ENCODE measurements at regions of chr21 and their contacts with region 1.

Region 1: DNA sequence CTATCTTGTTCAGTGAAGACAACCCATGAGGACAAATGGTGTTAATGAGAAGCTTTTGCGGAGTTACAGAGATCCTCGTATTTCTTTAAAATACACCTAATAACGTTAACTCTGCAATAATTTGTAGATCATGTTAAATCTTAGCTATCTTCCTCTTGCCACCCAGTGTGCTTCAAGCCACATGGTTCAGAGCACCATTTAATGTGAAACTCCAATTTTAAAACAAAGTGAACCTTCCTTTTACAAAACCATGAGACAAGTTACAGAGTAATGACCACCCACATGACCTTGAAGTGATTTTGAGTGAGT is 1.7 kb upstream of the KCNE2 start:
- DNase-seq: no peak
- H3K4me3 Mint-ChIP-seq: peak overlapping the region; percentile 25
- H3K27ac Mint-ChIP-seq: no peak overlapping the region
- H3K4me1 Mint-ChIP-seq: peaks cover 6% of the 10 kb centered on the region
- H3K27me3 Mint-ChIP-seq: peaks cover 37% of the 10 kb centered on the region
- CTCF ChIP-seq: no peak

Region 2: DNA sequence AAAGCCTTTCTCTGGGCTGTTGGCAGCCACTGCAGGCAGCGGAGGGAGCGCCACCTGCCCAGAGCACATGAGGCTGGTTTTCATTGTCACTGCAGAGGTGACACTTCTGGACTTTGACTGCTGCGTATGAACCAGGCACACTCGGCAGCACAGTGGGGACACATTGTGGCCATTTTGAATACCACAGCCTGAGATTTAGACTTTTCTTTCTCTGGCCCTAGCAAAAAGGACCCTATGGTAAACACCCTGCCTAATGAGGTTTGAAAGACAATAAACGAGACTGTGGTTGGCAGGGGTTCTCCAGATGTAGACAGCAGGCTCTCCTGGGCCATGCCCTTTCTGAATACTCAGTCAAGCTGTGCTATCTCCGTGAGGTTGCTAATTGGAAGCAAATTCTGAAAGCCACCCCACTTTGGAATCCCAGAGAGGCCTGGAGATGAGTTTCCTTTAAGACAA is 10.3 kb before region 1 on chr21:
- CTCF ChIA-PET with region 1: interaction called, 10 read pairs
- POLR2A ChIA-PET with region 1: no interaction called
- intact Hi-C with region 1: no loop called
- DNase-seq: peak; percentile 26
- H3K4me3 Mint-ChIP-seq: no peak overlapping the region
- H3K27ac Mint-ChIP-seq: no peak overlapping the region
- H3K4me1 Mint-ChIP-seq: no peaks in the 10 kb centered on the region
- H3K27me3 Mint-ChIP-seq: peaks cover 34% of the 10 kb centered on the region
- CTCF ChIP-seq: peak; percentile 32

Region 3: DNA sequence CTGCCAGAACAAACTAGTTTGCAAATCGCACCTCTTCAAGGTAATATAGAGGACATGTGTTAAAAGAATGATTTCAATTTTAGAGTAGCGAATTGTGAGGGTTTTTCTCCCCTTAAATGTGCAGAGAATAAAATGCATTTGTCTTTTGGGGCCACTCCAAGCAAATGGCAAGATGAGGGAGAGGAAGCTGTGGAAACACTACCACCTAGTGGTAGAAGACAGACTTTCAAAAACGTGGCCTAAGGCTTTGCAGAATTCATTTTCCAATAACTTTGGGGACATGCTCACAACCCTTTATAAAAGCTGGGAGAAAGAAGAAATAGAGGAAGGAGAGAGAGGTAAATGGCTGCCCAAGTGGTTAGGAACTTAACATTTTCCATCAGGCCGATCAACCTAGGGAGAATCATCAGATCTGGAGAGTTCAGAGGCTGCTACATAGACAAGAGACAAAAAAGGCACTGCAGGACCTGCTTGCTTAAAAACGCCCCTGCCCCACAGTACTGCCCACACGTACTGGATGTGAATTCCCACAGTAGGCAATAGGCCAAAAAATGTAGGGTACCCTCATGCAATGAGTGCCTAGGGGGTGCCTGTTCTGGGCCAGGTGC is 268.6 kb after region 1 on chr21:
- CTCF ChIA-PET with region 1: interaction called, 25 read pairs
- POLR2A ChIA-PET with region 1: no interaction called
- intact Hi-C with region 1: loop called (anchors 1 kb)
- DNase-seq: peak; percentile 70
- H3K4me3 Mint-ChIP-seq: no peak overlapping the region
- H3K27ac Mint-ChIP-seq: no peak overlapping the region
- H3K4me1 Mint-ChIP-seq: no peaks in the 10 kb centered on the region
- H3K27me3 Mint-ChIP-seq: peaks cover 49% of the 10 kb centered on the region
- CTCF ChIP-seq: peak; percentile 79